ENCODE measurements at regions of chr6 and their contacts with region 1.

Region 1: GRCh38 chr6:36752886-36753506 is 55.4 kb downstream of the RAB44 start:
- DNase-seq: no peak
- ATAC-seq: no peak
- H3K4me3 ChIP-seq: no peak overlapping the region
- H3K27ac ChIP-seq: no peak overlapping the region
- H3K4me1 ChIP-seq: no peaks in the 10 kb centered on the region; the same call in 1 of the 2 replicates
- H3K27me3 ChIP-seq: peaks cover 4% of the 10 kb centered on the region; the same call in 1 of the 2 replicates
- CTCF ChIP-seq: no peak
- POLR2A ChIP-seq: no peak
- RAD21 ChIP-seq: no peak

Region 2: DNA sequence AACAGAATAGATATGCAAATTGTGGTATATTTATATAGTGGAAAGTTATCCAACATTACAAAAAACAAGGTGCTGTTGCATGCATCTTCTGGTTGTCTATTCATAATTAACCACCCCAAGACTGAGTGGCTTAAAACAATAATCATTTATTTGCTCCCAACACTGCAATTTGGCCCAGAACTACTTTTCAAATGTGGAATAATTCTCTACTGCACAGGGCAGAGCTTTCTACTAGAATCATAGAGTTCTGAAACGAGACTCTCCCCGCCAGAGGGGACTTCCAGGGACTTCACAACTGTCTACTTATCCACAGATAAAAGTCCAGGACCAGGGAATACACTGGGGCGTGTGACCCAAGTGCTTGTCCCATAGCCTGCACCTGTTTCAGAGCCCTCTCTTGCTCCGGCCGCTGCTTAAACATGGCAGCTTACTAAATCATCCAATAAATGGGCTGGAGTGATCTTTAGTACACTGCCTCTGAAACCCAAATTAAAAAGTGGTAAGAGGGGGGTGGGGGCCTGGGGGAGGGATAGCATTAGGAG is 64.4 kb before region 1 on chr6:
- CTCF ChIA-PET with region 1: no interaction called
- POLR2A ChIA-PET with region 1: no interaction called
- dilution Hi-C with region 1: no loop called
- in situ Hi-C with region 1: no loop called
- intact Hi-C with region 1: no loop called
- DNase-seq: peak; percentile 50
- ATAC-seq: peak; percentile 21
- H3K4me3 ChIP-seq: no peak overlapping the region
- H3K27ac ChIP-seq: no peak overlapping the region
- H3K4me1 ChIP-seq: no peaks in the 10 kb centered on the region
- H3K27me3 ChIP-seq: no peaks in the 10 kb centered on the region; the same call in 1 of the 2 replicates
- CTCF ChIP-seq: no peak
- POLR2A ChIP-seq: no peak
- RAD21 ChIP-seq: no peak

Region 3: DNA sequence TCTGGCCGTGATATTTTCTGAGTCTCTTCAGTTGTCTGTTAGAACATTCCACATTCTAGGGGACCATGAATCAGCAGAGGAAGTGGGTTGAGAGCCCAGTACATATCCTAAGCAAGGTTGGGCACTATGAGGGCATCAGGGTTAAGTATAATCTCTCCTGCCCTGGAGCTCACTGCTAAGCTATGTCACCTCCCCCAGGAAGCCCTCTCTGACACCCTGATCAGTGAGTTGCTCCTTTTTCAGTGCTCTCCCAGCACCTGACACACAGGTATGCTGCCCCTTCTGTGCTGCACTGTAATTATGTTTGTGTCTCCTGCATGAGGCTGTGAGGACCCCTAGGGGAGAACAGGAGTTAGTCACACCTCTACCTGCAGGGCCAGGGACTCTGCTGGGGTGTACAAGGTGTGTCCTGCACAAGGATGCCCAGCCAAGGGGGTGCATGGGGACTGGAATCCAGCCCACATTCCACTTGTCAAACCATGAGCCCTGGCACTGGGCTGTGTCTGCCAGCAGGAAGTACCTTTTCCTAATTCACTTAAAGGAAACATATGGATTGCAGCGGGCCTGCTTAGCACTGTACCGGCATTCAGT is 51.5 kb before region 1 on chr6:
- CTCF ChIA-PET with region 1: no interaction called
- POLR2A ChIA-PET with region 1: no interaction called
- dilution Hi-C with region 1: no loop called
- in situ Hi-C with region 1: loop called (anchors 5 kb)
- intact Hi-C with region 1: no loop called
- DNase-seq: no peak
- ATAC-seq: peak; percentile 51
- H3K4me3 ChIP-seq: no peak overlapping the region
- H3K27ac ChIP-seq: no peak overlapping the region
- H3K4me1 ChIP-seq: no peaks in the 10 kb centered on the region
- H3K27me3 ChIP-seq: peaks cover 23% of the 10 kb centered on the region
- CTCF ChIP-seq: no peak
- POLR2A ChIP-seq: no peak
- RAD21 ChIP-seq: no peak

Region 4: DNA sequence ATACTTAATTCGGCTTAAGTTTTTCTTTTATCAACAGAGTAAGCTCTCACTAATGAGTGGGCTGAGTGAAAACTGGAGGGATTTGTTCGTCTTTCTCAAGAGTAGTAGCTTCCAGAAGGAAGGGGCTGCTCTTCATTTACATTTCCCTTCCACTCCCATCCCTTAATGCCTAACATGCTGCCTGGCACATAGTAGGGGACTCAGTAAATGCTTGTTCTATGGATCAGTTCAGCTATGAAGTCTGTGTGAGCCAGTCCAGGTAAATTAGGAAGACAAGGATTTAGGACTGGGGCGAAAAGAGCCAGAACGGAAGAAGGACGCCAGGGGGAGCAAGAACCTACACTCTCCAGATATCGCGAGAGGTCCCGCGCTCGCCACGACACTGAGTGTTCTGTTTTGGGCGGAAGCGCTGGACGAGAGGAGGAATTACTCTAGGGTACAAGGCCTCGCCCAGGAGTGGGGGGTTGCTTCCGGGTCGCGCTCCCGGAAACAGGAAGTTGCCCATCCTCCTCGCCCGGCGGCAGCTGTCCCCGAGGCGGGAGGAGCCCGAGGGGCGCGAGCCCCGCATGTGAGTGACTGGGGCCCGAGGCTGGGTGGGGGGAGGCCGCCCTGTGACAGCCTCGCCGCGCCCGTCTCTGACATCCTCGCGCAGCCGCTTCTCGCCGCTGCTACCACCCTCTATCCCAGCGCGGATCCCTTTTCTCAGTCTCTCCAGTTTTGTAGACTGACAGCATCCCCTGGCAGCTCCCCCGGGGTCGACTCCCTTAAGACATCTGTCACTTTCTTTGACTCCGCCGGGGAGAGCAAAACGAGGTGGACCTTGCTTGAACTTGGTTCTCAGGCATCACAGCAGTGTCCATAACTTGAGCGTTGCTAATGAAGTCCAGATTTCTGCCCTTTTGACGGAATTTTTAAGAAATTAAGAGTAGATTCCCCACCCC is 132.7 kb after region 1 on chr6 and contains the start of gene C6orf89:
- CTCF ChIA-PET with region 1: no interaction called
- POLR2A ChIA-PET with region 1: no interaction called
- dilution Hi-C with region 1: no loop called
- in situ Hi-C with region 1: no loop called
- intact Hi-C with region 1: no loop called
- DNase-seq: peak; percentile 96
- ATAC-seq: peak; percentile 100
- H3K4me3 ChIP-seq: peak within 1 kb of the TSS; percentile 80
- H3K27ac ChIP-seq: peak within 1 kb of the TSS; percentile 74
- H3K4me1 ChIP-seq: no peaks in the 10 kb centered on the region; the same call in 1 of the 2 replicates
- H3K27me3 ChIP-seq: no peaks in the 10 kb centered on the region
- CTCF ChIP-seq: peak; percentile 88
- POLR2A ChIP-seq: peak; percentile 56; the same call in 1 of the 2 replicates
- RAD21 ChIP-seq: peak; percentile 62
- total RNA-seq, gene C6orf89: 39.2 and 52.3 TPM in 2 replicates

Measured in IMR-90 (cell line).